Dendritic cell treated with granulocyte-macrophage colony-stimulating factor and Interleukin-4, amounts not matched to agents 40 ng/mL and 50 ng/mL, for 4 days (primary cell): ENCODE measurements at regions of chr5 and their contacts with region 1.

Region 1: GRCh38 chr5:172283020-172283861 is at the start of gene UBTD2:
- H3K4me3 Mint-ChIP-seq: peak within 1 kb of the TSS; percentile 93
- H3K27ac Mint-ChIP-seq: peak within 1 kb of the TSS; percentile 94
- H3K4me1 Mint-ChIP-seq: peaks cover 35% of the 10 kb centered on the region
- H3K27me3 Mint-ChIP-seq: peaks cover 7% of the 10 kb centered on the region

Region 2: GRCh38 chr5:172235132-172235780 is 48.0 kb before region 1 on chr5:
- intact Hi-C with region 1: loop called (anchors 5 kb)
- H3K4me3 Mint-ChIP-seq: peak overlapping the region; percentile 47
- H3K27ac Mint-ChIP-seq: peak overlapping the region; percentile 86
- H3K4me1 Mint-ChIP-seq: peaks cover 53% of the 10 kb centered on the region
- H3K27me3 Mint-ChIP-seq: no peaks in the 10 kb centered on the region